CD4-positive, alpha-beta T cell (primary cell): ENCODE measurements at regions of chr4 and their contacts with region 1.

Region 1: DNA sequence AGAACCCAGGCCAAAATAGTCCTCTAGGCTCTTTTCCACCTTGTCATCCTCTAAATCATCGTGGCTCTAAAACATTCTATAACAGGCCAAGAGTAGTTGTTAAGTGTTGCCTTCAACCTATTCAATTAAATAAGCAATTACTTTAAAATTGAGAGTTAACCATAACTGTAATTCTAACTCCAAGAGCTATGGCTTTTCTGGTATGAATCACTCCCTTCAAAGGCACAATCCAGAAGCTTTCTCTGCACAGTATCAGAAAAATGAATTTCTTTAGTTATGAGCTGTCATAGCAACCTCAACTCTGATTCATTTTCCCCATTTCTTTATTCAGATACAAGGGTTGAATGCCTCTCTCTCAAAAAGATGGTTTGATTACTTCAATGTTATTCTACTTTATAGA is 21.7 kb downstream of the INPP4B start:
- DNase-seq: no peak
- ATAC-seq: no peak
- H3K4me3 ChIP-seq: no peak overlapping the region
- H3K4me3 Mint-ChIP-seq: no peak overlapping the region
- H3K27ac ChIP-seq: no peak overlapping the region
- H3K27ac Mint-ChIP-seq: no peak overlapping the region
- H3K4me1 ChIP-seq: no peaks in the 10 kb centered on the region
- H3K4me1 Mint-ChIP-seq: no peaks in the 10 kb centered on the region
- H3K27me3 ChIP-seq: no peaks in the 10 kb centered on the region
- H3K27me3 Mint-ChIP-seq: no peaks in the 10 kb centered on the region
- CTCF ChIP-seq: no peak

Region 2: GRCh38 chr4:142314686-142315085 is 509.7 kb before region 1 on chr4:
- CTCF ChIA-PET with region 1: no interaction called
- POLR2A ChIA-PET with region 1: no interaction called
- intact Hi-C with region 1: loop called in 1 of 2 experiments (anchors 10 kb)
- DNase-seq: peak in 2 of 14 experiments; percentile 11 to 25
- ATAC-seq: peak; percentile 43
- H3K4me3 ChIP-seq: no peak overlapping the region
- H3K4me3 Mint-ChIP-seq: peak overlapping the region; percentile 18
- H3K27ac ChIP-seq: no peak overlapping the region
- H3K27ac Mint-ChIP-seq: peak overlapping the region; percentile 24
- H3K4me1 ChIP-seq: peaks cover 33% of the 10 kb centered on the region
- H3K4me1 Mint-ChIP-seq: peaks cover 88% of the 10 kb centered on the region
- H3K27me3 ChIP-seq: no peaks in the 10 kb centered on the region
- H3K27me3 Mint-ChIP-seq: no peaks in the 10 kb centered on the region
- CTCF ChIP-seq: no peak

Region 3: GRCh38 chr4:142846729-142847596 is 22.6 kb after region 1 on chr4:
- CTCF ChIA-PET with region 1: no interaction called
- POLR2A ChIA-PET with region 1: no interaction called
- intact Hi-C with region 1: no loop called
- DNase-seq: peak; percentile 63 to 87 (median 70)
- ATAC-seq: peak; percentile 87
- H3K4me3 ChIP-seq: peak overlapping the region; percentile 67
- H3K4me3 Mint-ChIP-seq: peak overlapping the region; percentile 89
- H3K27ac ChIP-seq: no peak overlapping the region
- H3K27ac Mint-ChIP-seq: peak overlapping the region; percentile 47
- H3K4me1 ChIP-seq: peaks cover 24% of the 10 kb centered on the region
- H3K4me1 Mint-ChIP-seq: peaks cover 14% of the 10 kb centered on the region
- H3K27me3 ChIP-seq: peaks cover 4 to 12% of the 10 kb centered on the region in 2 experiments
- H3K27me3 Mint-ChIP-seq: peaks cover 22% of the 10 kb centered on the region
- CTCF ChIP-seq: peak; percentile 70